ENCODE measurements at regions of chr7 and their contacts with region 1.

Region 1: GRCh38 chr7:100852048-100852872 is at the start of gene SLC12A9:
- DNase-seq: peak; percentile 76 to 93
- H3K4me3 ChIP-seq: peak within 1 kb of the TSS; percentile 97
- H3K27ac ChIP-seq: no peak within 1 kb of the TSS
- H3K4me1 ChIP-seq: peaks cover 9% of the 10 kb centered on the region
- H3K27me3 ChIP-seq: no peaks in the 10 kb centered on the region
- CTCF ChIP-seq: peak; percentile 95
- total RNA-seq, gene SLC12A9: 34.7 and 36.7 TPM in 2 replicates

Region 2: DNA sequence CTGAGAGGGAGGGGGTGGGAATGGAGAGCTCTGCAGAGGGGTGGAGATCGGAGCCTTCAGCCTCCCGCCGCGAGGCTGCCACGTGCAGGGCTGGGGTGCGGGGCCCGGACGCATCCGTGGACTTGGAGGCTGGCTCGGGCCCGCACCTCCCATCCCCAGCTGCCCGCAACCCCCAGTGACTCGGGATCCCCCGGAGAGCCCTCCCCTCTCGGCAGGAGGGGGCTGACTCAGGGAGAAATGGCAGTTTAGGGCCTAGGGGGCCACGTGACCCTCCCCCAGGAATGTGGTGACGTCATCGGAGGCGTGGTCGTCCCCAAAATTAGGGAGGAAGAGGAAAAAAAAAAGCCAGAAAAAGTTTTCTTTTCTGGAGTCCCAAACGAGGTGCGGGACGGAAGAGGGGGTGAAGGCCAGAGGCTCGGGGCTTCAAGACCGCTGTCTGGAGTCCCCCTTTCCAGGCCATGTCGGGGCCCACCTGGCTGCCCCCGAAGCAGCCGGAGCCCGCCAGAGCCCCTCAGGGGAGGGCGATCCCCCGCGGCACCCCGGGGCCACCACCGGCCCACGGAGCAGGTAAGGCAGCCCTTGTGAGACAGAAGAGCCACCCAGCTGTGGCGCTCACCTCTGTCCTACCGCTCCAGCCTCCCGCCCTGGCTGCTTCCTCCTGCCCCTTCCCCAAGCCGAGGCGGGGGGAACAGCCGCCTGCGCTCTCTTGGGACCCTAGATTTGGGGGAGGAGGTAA is 14.9 kb after region 1 on chr7 and contains the start of gene TRIP6:
- CTCF ChIA-PET with region 1: no interaction called
- POLR2A ChIA-PET with region 1: no interaction called
- intact Hi-C with region 1: loop called (anchors 1 kb)
- DNase-seq: peak; percentile 80 to 92
- H3K4me3 ChIP-seq: peak within 1 kb of the TSS; percentile 99
- H3K27ac ChIP-seq: peak within 1 kb of the TSS; percentile 68
- H3K4me1 ChIP-seq: peaks cover 18% of the 10 kb centered on the region
- H3K27me3 ChIP-seq: no peaks in the 10 kb centered on the region
- CTCF ChIP-seq: no peak
- total RNA-seq, gene TRIP6: 89.3 and 91.4 TPM in 2 replicates

Region 3: GRCh38 chr7:100933735-100934134 is 81.5 kb after region 1 on chr7:
- CTCF ChIA-PET with region 1: no interaction called
- POLR2A ChIA-PET with region 1: no interaction called
- intact Hi-C with region 1: no loop called
- DNase-seq: no peak
- H3K4me3 ChIP-seq: no peak overlapping the region
- H3K27ac ChIP-seq: no peak overlapping the region
- H3K4me1 ChIP-seq: peaks cover 24% of the 10 kb centered on the region
- H3K27me3 ChIP-seq: 0 out of 2 replicates have a peak, but pooled peaks cover 6% of the 10 kb centered on the region
- CTCF ChIP-seq: no peak

Region 4: DNA sequence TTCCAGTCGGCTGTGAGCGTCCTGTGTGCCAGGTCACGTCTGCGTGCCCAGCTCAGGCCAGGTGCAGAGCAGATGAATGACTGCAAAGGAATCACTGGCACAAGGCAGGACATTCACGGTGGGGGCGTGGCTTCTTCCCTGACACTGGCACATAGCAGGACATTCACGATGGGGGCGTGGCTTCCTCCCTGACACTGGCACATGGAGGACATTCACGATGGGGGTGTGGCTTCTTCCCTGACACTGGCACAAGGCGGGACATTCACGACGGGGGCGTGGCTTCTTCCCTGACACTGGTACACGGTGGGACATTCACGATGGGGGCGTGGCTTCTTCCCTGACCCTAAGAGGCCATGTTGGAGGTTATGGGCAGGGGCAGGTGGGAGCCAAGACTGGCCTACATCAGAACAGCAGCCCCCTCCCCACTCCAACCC is 712.5 kb after region 1 on chr7:
- CTCF ChIA-PET with region 1: no interaction called
- POLR2A ChIA-PET with region 1: no interaction called
- intact Hi-C with region 1: no loop called
- DNase-seq: peak; percentile 58 to 61
- H3K4me3 ChIP-seq: no peak overlapping the region
- H3K27ac ChIP-seq: no peak overlapping the region
- H3K4me1 ChIP-seq: no peaks in the 10 kb centered on the region
- H3K27me3 ChIP-seq: peaks cover 19% of the 10 kb centered on the region
- CTCF ChIP-seq: no peak

Measured in PC-9 (cell line).